MCF 10A (cell line): ENCODE measurements at regions of chr2 and their contacts with region 1.

Region 1: DNA sequence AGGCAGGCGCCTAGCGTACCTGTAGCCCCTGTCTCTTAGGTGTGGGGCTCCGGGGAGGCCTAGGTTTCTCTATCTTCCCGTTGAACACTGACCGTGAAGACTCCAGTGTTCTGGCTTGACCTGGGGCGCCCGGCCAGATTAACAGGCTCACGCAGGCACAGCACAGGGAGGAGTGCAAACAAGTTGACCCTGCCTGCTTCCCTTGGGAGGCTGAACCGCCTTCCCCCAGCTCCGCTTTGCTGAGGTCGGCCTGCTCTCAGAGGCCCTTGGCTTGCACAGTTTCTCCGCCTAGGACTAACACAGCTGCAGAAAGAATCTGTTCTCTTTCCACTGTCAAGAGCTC is 566 bp downstream of the PCYOX1 start:
- DNase-seq: no peak
- H3K4me3 Mint-ChIP-seq: peak overlapping the region; percentile 87
- H3K27ac Mint-ChIP-seq: peak overlapping the region; percentile 61
- H3K4me1 Mint-ChIP-seq: peaks cover 20% of the 10 kb centered on the region
- H3K27me3 Mint-ChIP-seq: no peaks in the 10 kb centered on the region
- CTCF ChIP-seq: no peak

Region 2: DNA sequence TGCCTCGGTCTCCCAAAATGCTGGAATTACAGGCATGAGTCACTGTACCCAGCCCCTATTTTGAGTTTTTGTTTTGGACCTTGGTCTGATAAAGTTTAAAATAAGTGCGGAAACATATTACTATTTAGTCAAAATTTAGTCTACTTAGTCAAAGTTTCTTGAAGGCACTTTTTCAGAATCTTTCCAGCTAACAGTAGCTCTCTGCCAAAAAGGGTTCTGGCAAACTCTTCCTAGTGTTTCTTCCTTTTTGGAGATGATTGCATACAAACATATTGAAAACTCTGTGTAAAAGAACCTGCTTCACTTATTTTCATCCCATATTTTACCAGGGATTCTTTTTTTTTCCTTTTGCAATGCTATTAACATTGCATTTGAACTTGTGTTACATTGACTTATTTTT is 400.2 kb before region 1 on chr2:
- CTCF ChIA-PET with region 1: no interaction called
- POLR2A ChIA-PET with region 1: no interaction called
- intact Hi-C with region 1: no loop called
- DNase-seq: no peak
- H3K4me3 Mint-ChIP-seq: no peak overlapping the region
- H3K27ac Mint-ChIP-seq: no peak overlapping the region
- H3K4me1 Mint-ChIP-seq: no peaks in the 10 kb centered on the region
- H3K27me3 Mint-ChIP-seq: no peaks in the 10 kb centered on the region
- CTCF ChIP-seq: no peak

Region 3: GRCh38 chr2:70190418-70191243 is 67.9 kb before region 1 on chr2 and contains the start of gene C2orf42:
- CTCF ChIA-PET with region 1: no interaction called
- POLR2A ChIA-PET with region 1: interaction called, 20 read pairs
- intact Hi-C with region 1: no loop called
- DNase-seq: peak; percentile 97
- H3K4me3 Mint-ChIP-seq: peak within 1 kb of the TSS; percentile 80
- H3K27ac Mint-ChIP-seq: peak within 1 kb of the TSS; percentile 97
- H3K4me1 Mint-ChIP-seq: peaks cover 5% of the 10 kb centered on the region
- H3K27me3 Mint-ChIP-seq: no peaks in the 10 kb centered on the region
- CTCF ChIP-seq: no peak
- total RNA-seq, gene C2orf42: 17.6 and 28.5 TPM in 2 replicates

Region 4: GRCh38 chr2:70248181-70248847 is 10.2 kb before region 1 on chr2 and contains the start of gene TIA1:
- CTCF ChIA-PET with region 1: interaction called, 4 read pairs
- POLR2A ChIA-PET with region 1: interaction called, 47 read pairs
- intact Hi-C with region 1: no loop called
- DNase-seq: peak; percentile 99
- H3K4me3 Mint-ChIP-seq: peak within 1 kb of the TSS; percentile 82
- H3K27ac Mint-ChIP-seq: peak within 1 kb of the TSS; percentile 86
- H3K4me1 Mint-ChIP-seq: peaks cover 15% of the 10 kb centered on the region
- H3K27me3 Mint-ChIP-seq: no peaks in the 10 kb centered on the region
- CTCF ChIP-seq: no peak
- total RNA-seq, gene TIA1: 75.7 and 83.9 TPM in 2 replicates

Region 5: DNA sequence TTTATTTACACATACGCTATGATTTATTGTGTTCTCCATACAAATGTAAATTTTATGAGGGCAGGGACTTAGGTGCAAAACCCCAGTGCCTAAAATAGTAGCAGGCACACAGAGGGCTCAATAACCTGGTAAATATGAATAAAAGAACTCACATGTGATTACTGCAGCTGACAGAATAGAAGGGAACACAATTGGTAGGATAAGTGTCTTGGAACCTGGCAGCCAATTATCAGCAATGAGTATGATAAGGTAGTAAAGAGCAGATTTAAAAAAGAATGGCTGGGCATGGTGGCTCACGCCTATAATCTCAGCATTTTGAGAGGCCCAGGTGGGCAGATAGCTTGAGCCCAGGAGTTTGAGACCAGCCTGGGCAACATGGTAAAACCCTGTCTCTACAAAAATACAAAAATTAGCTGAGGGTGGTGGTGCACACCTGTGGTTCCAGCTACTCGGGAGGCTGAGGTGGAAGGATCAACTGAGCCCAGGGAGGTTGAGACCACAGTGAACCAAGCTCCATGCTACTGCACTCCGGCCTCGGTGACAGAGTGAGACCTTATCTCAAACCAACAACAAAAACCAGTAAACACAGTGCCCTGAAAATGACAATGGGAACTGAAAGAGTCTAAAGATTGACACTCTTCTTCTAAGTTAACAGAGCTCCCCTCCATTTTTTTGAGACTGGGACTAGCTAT is 25.1 kb after region 1 on chr2:
- CTCF ChIA-PET with region 1: no interaction called
- POLR2A ChIA-PET with region 1: interaction called, 15 read pairs
- intact Hi-C with region 1: no loop called
- DNase-seq: no peak
- H3K4me3 Mint-ChIP-seq: no peak overlapping the region
- H3K27ac Mint-ChIP-seq: no peak overlapping the region
- H3K4me1 Mint-ChIP-seq: peaks cover 7% of the 10 kb centered on the region
- H3K27me3 Mint-ChIP-seq: no peaks in the 10 kb centered on the region
- CTCF ChIP-seq: no peak